Heart left ventricle (tissue), 16 donors: ENCODE measurements at regions of chr6 and their contacts with region 1.

Region 1: DNA sequence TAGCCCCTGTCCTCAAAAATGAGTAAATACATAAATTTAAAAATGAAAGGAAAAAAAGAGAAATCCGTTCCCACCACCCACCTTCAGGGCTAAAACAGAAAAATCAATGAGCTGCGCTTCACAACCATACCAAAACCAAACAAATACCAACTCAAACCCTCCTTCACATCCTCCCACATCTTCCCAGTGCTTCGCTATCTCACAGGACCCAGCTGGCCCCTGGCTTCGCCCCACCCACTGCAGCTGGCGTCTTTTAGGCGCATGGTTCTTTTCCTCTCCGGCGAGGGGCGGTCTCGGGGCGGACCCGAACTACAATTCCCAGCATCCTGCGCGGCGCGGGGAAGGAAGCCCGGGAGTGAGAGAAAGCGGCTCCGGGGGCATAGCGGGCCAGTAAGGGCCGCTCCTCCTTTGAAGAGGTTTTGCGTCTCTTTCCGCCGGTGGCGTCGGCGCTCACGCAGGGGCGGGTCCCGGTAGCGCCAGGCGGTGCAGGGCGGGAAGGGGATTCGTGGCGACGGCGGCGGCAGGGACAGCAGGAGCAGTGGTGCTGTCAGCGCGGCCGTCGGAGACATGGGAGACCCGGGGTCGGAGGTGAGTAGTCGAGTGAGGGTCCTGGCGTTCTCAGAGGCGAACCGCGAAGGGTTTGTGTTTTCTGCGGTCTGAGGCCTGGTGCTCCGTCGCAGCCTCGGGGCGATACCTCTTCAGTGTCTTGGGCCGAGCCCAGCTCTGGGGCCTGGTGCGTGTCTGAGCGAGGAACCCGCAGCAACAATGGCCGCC is at the start of gene ZNF451:
- DNase-seq: peak; percentile 98 to 99 (median 99)
- ATAC-seq: peak; percentile 99 to 100 (median 99)
- H3K4me3 ChIP-seq: peak within 1 kb of the TSS; percentile 41 to 79 (median 65)
- H3K27ac ChIP-seq: peak within 1 kb of the TSS; percentile 64 to 90 (median 83)
- H3K4me1 ChIP-seq: peaks cover 3 to 44% (median 30%) of the 10 kb centered on the region in 12 donors
- H3K27me3 ChIP-seq: no peaks in the 10 kb centered on the region
- CTCF ChIP-seq: peak in 2 of 12 donors; percentile 8 to 9
- POLR2A ChIP-seq: peak; percentile 70 to 93
- total RNA-seq, gene ZNF451: 17.7 to 37.1 (median 22.3) TPM

Region 2: DNA sequence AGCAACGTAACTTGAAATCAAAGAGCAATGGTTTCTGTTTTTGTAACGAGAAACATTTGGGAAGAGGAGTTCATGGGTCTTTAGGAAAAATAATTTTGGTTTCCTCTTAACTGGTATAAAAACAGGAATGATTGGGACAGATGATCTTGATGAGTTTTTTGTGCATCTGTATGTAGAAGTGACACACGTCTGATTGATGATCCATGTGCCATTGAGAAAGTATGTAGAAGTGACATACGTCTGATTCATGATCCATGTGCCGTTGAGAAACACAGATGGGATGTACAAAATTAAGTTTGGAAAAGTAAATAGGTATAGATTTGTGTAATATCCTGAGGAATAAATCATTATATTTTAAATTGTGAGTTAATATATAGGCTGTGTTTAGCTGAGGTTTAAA is 41.3 kb before region 1 on chr6:
- intact Hi-C with region 1: loop called in 4 of 10 experiments (anchors 5 kb)
- DNase-seq: no peak
- ATAC-seq: no peak
- H3K4me3 ChIP-seq: no peak overlapping the region
- H3K27ac ChIP-seq: no peak overlapping the region
- H3K4me1 ChIP-seq: peaks cover 0 to 19% (median 6%) of the 10 kb centered on the region in 12 donors
- H3K27me3 ChIP-seq: no peaks in the 10 kb centered on the region
- CTCF ChIP-seq: no peak
- POLR2A ChIP-seq: no peak

Region 3: GRCh38 chr6:57221936-57222742 is 132.3 kb after region 1 on chr6 and contains the start of gene RAB23:
- intact Hi-C with region 1: loop called in 1 of 10 experiments (anchors 10 kb)
- DNase-seq: peak; percentile 84 to 94 (median 89)
- ATAC-seq: peak; percentile 98 to 99 (median 98)
- H3K4me3 ChIP-seq: peak within 1 kb of the TSS; percentile 64 to 98 (median 86)
- H3K27ac ChIP-seq: peak within 1 kb of the TSS; percentile 14 to 96 (median 84)
- H3K4me1 ChIP-seq: peaks cover 0 to 15% (median 3%) of the 10 kb centered on the region in 12 donors
- H3K27me3 ChIP-seq: no peaks in the 10 kb centered on the region
- CTCF ChIP-seq: peak in 2 of 12 donors; percentile 5 to 34
- POLR2A ChIP-seq: peak in 1 of 2 donors; percentile 86
- total RNA-seq, gene RAB23: 7.6 to 15.4 (median 9.6) TPM